PC-9 (cell line): ENCODE measurements at regions of chr11 and their contacts with region 1.

Region 1: GRCh38 chr11:65095974-65096806 is at the start of gene VPS51:
- DNase-seq: peak; percentile 84 to 89
- H3K4me3 ChIP-seq: peak within 1 kb of the TSS; percentile 85
- H3K27ac ChIP-seq: peak within 1 kb of the TSS; percentile 63
- H3K4me1 ChIP-seq: peaks cover 20% of the 10 kb centered on the region
- H3K27me3 ChIP-seq: no peaks in the 10 kb centered on the region
- CTCF ChIP-seq: no peak
- total RNA-seq, gene VPS51: 113 and 279 TPM in 2 replicates

Region 2: GRCh38 chr11:63745304-63746170 is 1350.7 kb before region 1 on chr11:
- CTCF ChIA-PET with region 1: no interaction called
- POLR2A ChIA-PET with region 1: no interaction called
- intact Hi-C with region 1: no loop called
- DNase-seq: no peak
- H3K4me3 ChIP-seq: no peak overlapping the region
- H3K27ac ChIP-seq: no peak overlapping the region
- H3K4me1 ChIP-seq: no peaks in the 10 kb centered on the region
- H3K27me3 ChIP-seq: no peaks in the 10 kb centered on the region
- CTCF ChIP-seq: peak; percentile 55

Region 3: GRCh38 chr11:64960719-64961118 is 135.5 kb before region 1 on chr11:
- CTCF ChIA-PET with region 1: no interaction called
- POLR2A ChIA-PET with region 1: no interaction called
- intact Hi-C with region 1: no loop called
- DNase-seq: no peak
- H3K4me3 ChIP-seq: no peak overlapping the region
- H3K27ac ChIP-seq: no peak overlapping the region
- H3K4me1 ChIP-seq: no peaks in the 10 kb centered on the region
- H3K27me3 ChIP-seq: no peaks in the 10 kb centered on the region
- CTCF ChIP-seq: no peak

Region 4: DNA sequence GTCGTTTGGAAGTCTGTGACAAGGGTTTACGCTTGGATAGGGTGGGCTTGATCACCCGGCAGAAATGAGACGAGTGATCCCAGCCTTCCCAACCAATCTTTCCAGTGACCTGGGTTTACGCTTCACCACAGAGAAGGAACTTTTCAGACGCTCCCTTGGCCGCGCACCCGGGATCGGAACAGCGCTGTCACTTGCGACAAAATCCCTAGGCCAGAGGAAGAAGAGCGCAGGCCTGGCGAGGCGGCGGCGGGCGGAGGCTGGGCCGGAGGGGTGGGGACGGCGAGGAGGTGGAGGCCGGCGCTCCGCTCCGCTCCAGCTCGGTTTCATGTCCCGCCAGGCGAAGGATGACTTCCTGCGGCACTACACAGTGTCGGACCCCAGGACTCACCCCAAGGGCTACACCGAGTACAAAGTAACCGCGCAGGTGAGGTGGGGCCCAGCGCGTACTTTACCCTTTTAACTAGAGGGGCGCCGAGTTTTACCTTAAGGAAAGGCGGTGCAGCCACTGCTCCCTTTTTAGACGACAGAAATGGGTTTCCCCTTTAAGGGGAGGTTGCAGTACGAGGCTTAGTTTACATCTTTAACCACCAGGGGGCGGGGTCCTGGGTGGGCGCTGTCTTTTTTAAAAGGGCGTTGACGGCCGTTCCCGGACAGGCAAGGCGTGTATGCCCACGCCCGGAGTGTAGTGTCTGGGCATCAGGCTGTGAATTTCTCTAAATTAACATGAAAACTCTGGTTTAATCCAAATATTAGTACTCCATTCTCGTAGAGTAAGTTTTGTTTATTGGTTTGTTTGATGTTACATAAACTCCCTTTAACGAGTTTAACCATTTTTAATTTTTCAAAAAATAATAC is 68.8 kb before region 1 on chr11 and contains the start of gene SNX15:
- CTCF ChIA-PET with region 1: no interaction called
- POLR2A ChIA-PET with region 1: interaction called, 20 read pairs
- intact Hi-C with region 1: no loop called
- DNase-seq: peak; percentile 90 to 95
- H3K4me3 ChIP-seq: peak within 1 kb of the TSS; percentile 64
- H3K27ac ChIP-seq: peak within 1 kb of the TSS; percentile 36
- H3K4me1 ChIP-seq: peaks cover 9% of the 10 kb centered on the region
- H3K27me3 ChIP-seq: no peaks in the 10 kb centered on the region
- CTCF ChIP-seq: peak; percentile 94
- total RNA-seq, gene SNX15: 38.2 and 40.6 TPM in 2 replicates

Region 5: GRCh38 chr11:65040847-65041621 is 55.2 kb before region 1 on chr11 and contains the start of gene SAC3D1:
- CTCF ChIA-PET with region 1: no interaction called
- POLR2A ChIA-PET with region 1: no interaction called
- intact Hi-C with region 1: loop called (anchors 5 kb)
- DNase-seq: peak; percentile 94 to 95
- H3K4me3 ChIP-seq: peak within 1 kb of the TSS; percentile 82
- H3K27ac ChIP-seq: peak within 1 kb of the TSS; percentile 67
- H3K4me1 ChIP-seq: peaks cover 25% of the 10 kb centered on the region
- H3K27me3 ChIP-seq: no peaks in the 10 kb centered on the region
- CTCF ChIP-seq: no peak
- total RNA-seq, gene SAC3D1: 33.9 and 48.0 TPM in 2 replicates

Region 6: GRCh38 chr11:65083834-65084597 is 12.2 kb before region 1 on chr11 and contains the starts of genes CDCA5 and ZFPL1:
- CTCF ChIA-PET with region 1: no interaction called
- POLR2A ChIA-PET with region 1: interaction called, 6 read pairs
- intact Hi-C with region 1: loop called (anchors 1 kb)
- DNase-seq: peak; percentile 89 to 97
- H3K4me3 ChIP-seq: peak within 1 kb of the TSS; percentile 82
- H3K27ac ChIP-seq: peak within 1 kb of the TSS; percentile 82
- H3K4me1 ChIP-seq: peaks cover 17% of the 10 kb centered on the region
- H3K27me3 ChIP-seq: no peaks in the 10 kb centered on the region
- CTCF ChIP-seq: no peak
- total RNA-seq, gene CDCA5: 86.4 and 97.8 TPM in 2 replicates
- total RNA-seq, gene ZFPL1: 63.6 and 68.2 TPM in 2 replicates

Region 7: DNA sequence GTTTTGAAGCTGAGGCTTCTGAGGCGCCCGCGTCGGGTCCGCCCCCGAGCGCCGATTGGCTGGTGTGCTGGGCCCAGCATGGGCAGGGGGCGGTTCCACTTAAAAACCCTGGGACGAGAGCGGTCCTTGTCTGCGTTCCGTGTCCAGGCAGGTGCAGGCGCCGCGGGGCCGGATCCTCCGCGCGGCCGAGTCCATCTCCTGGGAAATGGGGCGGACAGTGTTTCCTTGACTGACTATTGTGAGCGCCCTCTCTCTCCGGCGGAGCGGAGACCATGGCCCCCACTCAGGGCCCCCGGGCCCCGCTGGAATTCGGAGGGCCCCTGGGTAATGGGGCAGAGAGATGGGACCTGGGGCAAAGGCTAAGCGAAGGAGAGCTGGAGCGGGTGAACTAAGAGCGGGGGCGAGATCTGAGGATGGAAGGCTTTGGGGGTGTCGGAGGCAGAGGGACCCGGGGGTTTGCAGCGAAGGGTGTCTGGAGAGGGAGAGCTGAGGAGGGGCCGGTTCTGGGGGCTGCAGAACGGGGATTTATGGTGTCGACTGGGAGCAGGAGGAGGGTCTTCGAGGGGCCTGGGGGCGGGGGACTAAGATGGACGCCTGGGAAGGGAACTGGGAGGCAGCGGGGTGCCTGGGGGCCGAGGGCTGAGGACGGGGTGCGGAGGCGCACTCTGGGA is 15.7 kb after region 1 on chr11 and contains the start of gene TM7SF2:
- CTCF ChIA-PET with region 1: interaction called, 3 read pairs
- POLR2A ChIA-PET with region 1: interaction called, 13 read pairs
- intact Hi-C with region 1: no loop called
- DNase-seq: peak; percentile 92 to 97
- H3K4me3 ChIP-seq: peak within 1 kb of the TSS; percentile 78
- H3K27ac ChIP-seq: no peak within 1 kb of the TSS
- H3K4me1 ChIP-seq: peaks cover 40% of the 10 kb centered on the region
- H3K27me3 ChIP-seq: no peaks in the 10 kb centered on the region
- CTCF ChIP-seq: no peak
- total RNA-seq, gene TM7SF2: 49.5 and 72.3 TPM in 2 replicates

Region 8: DNA sequence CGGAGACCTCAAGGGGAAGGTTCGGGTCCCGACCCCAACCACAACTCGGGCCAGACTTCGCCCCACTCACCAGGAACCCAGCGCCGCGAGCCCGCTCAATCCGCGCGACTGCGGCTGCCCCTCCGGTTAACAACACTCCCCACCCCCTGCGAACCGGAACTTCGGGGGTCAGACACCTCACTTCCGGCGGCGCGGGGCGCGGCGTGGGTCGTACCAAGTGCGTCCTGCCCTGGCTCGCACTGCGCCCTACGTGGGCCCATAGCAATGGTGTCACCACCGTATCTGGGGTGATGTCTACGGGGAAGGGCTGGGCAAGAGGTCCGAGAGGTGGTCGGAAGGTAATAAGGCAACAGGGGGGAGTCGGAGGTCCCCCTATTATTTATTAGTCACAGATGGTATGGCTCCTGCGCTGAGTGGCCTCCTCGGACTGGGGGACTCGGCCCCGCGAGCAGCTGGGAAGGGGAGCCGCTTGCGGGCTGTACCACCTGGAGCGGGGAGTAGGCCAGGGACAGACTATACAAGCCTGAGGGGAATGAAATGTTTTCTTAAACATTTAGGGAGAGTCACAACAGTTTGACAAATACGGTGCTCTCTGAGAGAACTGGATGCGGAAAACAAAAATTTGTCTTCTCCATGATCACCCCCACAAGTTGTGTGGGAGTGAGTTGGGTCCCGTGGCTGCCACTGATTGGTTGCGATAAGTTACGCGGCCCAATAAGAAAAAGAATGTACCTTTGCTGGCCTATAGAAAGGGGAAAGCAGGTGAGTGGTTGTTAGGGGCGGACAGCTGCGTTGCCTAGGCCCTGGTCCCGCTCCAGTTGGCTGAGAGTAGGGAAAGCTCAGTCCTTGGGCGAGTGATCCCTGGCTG is 38.4 kb after region 1 on chr11 and contains the start of gene SYVN1:
- CTCF ChIA-PET with region 1: no interaction called
- POLR2A ChIA-PET with region 1: interaction called, 16 read pairs
- intact Hi-C with region 1: no loop called
- DNase-seq: peak; percentile 95 to 99
- H3K4me3 ChIP-seq: peak within 1 kb of the TSS; percentile 92
- H3K27ac ChIP-seq: peak within 1 kb of the TSS; percentile 92
- H3K4me1 ChIP-seq: peaks cover 19% of the 10 kb centered on the region
- H3K27me3 ChIP-seq: no peaks in the 10 kb centered on the region
- CTCF ChIP-seq: no peak
- total RNA-seq, gene SYVN1: 40.9 and 51.5 TPM in 2 replicates

Region 9: GRCh38 chr11:65150509-65151271 is 54.5 kb after region 1 on chr11:
- CTCF ChIA-PET with region 1: no interaction called
- POLR2A ChIA-PET with region 1: interaction called, 10 read pairs
- intact Hi-C with region 1: no loop called
- DNase-seq: peak; percentile 99 to 100
- H3K4me3 ChIP-seq: peak overlapping the region; percentile 18; the same call in 1 of the 2 replicates
- H3K27ac ChIP-seq: peak overlapping the region; percentile 88
- H3K4me1 ChIP-seq: peaks cover 40% of the 10 kb centered on the region
- H3K27me3 ChIP-seq: no peaks in the 10 kb centered on the region
- CTCF ChIP-seq: no peak; the same call in 1 of the 2 replicates